ENCODE measurements at regions of chr7 and their contacts with region 1.

Region 1: DNA sequence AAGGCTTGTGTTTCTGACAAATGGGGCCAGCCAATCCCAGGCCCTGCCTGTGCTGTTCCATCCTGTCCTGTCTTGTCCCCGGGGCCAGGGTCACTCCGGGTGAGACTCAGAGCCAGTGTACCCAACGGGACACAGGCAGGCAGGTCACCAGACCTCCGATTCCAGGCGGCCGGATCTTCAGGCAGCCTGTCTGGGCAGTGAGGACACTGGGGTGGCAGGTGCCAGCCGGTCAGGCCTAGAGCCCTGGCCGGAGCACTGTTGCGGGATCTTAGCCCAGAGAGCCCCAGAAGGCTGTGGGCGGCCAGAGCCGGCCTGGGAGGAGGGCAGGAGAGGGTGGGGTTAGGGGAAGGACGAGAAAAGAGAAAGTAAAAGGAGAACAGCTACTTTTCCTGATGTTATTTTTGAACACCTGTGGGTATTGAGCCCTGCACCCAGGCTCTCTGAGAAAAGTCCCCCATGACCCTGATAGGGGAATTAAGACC is 134.3 kb upstream of the TNRC18 start:
- DNase-seq: peak; percentile 67
- ATAC-seq: peak; percentile 57
- H3K4me3 ChIP-seq: peak overlapping the region; percentile 71
- H3K27ac ChIP-seq: peak overlapping the region; percentile 98
- H3K4me1 ChIP-seq: peaks cover 39% of the 10 kb centered on the region
- H3K27me3 ChIP-seq: no peaks in the 10 kb centered on the region
- CTCF ChIP-seq: no peak
- EP300 ChIP-seq: no peak
- POLR2A ChIP-seq: peak; percentile 65
- RAD21 ChIP-seq: no peak

Region 2: GRCh38 chr7:5501465-5501864 is 56.5 kb before region 1 on chr7:
- CTCF ChIA-PET with region 1: interaction called, 3 read pairs
- POLR2A ChIA-PET with region 1: interaction called, 48 read pairs
- RAD21 ChIA-PET with region 1: interaction called, 14 read pairs
- SMC1A ChIA-PET with region 1: interaction called, 14 read pairs
- in situ Hi-C with region 1: no loop called
- intact Hi-C with region 1: no loop called
- DNase-seq: no peak
- ATAC-seq: no peak
- H3K4me3 ChIP-seq: no peak overlapping the region
- H3K27ac ChIP-seq: no peak overlapping the region
- H3K4me1 ChIP-seq: peaks cover 3% of the 10 kb centered on the region; the same call in 1 of the 2 replicates
- H3K27me3 ChIP-seq: no peaks in the 10 kb centered on the region
- CTCF ChIP-seq: no peak
- EP300 ChIP-seq: no peak
- POLR2A ChIP-seq: no peak
- RAD21 ChIP-seq: no peak

Region 3: DNA sequence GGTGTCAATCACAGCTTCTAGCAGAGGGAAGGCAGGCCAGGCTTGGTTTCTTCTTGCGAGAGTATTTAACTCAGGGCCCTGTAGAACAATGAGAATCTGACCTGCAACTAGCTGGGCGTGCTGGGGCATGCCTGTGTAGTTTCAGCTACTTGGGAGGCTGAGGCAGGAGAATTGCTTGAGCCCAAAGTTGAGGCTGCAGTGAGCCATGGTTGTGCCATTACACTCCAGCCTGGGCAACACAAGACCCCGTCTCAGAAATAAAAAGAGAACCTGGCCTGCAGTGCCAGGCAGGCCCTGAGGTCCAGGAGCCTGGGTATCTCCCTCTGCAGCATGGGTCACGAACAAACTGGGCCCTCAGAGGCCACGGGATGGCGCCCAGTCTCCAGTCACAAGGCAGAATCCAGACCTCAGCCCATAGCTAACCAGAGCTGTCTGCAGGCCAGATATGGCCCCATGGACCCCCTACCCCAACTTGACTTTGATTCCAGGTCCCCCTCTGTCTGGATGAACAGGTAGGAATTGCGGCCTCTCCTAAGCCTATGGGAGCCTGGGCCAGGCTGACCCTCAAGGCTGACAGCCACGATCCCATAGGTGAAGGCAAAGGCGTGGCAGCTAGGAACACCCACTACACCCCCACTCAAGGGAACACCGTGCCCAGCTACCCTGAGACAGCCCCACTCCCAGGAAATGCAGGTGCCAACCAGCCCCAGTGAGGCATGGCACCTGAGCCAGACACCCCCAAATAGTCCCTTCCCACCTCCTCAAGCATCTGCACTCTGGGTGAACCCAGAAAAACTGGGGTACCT is 31.7 kb before region 1 on chr7:
- CTCF ChIA-PET with region 1: interaction called, 34 read pairs
- POLR2A ChIA-PET with region 1: interaction called, 12 read pairs
- RAD21 ChIA-PET with region 1: interaction called, 28 read pairs
- SMC1A ChIA-PET with region 1: interaction called, 30 read pairs
- in situ Hi-C with region 1: no loop called
- intact Hi-C with region 1: loop called (anchors 1 kb)
- DNase-seq: no peak
- ATAC-seq: peak; percentile 4
- H3K4me3 ChIP-seq: peak overlapping the region; percentile 99; the same call in 1 of the 2 replicates
- H3K27ac ChIP-seq: peak overlapping the region; percentile 3
- H3K4me1 ChIP-seq: peaks cover 5% of the 10 kb centered on the region
- H3K27me3 ChIP-seq: no peaks in the 10 kb centered on the region
- CTCF ChIP-seq: peak in 1 of 3 experiments; percentile 31; a peak in 2 of 6 replicates
- EP300 ChIP-seq: no peak
- POLR2A ChIP-seq: no peak
- RAD21 ChIP-seq: 0 out of 2 replicates have a peak, but pooled peaks have one; percentile 1

Region 4: GRCh38 chr7:5610500-5611186 is 52.7 kb after region 1 on chr7:
- CTCF ChIA-PET with region 1: no interaction called
- POLR2A ChIA-PET with region 1: interaction called, 11 read pairs
- RAD21 ChIA-PET with region 1: no interaction called
- SMC1A ChIA-PET with region 1: interaction called, 4 read pairs
- in situ Hi-C with region 1: no loop called
- intact Hi-C with region 1: no loop called
- DNase-seq: no peak
- ATAC-seq: no peak
- H3K4me3 ChIP-seq: no peak overlapping the region
- H3K27ac ChIP-seq: no peak overlapping the region
- H3K4me1 ChIP-seq: no peaks in the 10 kb centered on the region
- H3K27me3 ChIP-seq: no peaks in the 10 kb centered on the region
- CTCF ChIP-seq: no peak
- EP300 ChIP-seq: no peak
- POLR2A ChIP-seq: no peak
- RAD21 ChIP-seq: no peak

Region 5: GRCh38 chr7:5677538-5678294 is 119.8 kb after region 1 on chr7:
- CTCF ChIA-PET with region 1: interaction called, 4 read pairs
- POLR2A ChIA-PET with region 1: interaction called, 5 read pairs
- RAD21 ChIA-PET with region 1: interaction called, 24 read pairs
- SMC1A ChIA-PET with region 1: interaction called, 20 read pairs
- in situ Hi-C with region 1: no loop called
- intact Hi-C with region 1: no loop called
- DNase-seq: no peak
- ATAC-seq: peak; percentile 81
- H3K4me3 ChIP-seq: no peak overlapping the region
- H3K27ac ChIP-seq: peak overlapping the region; percentile 10
- H3K4me1 ChIP-seq: peaks cover 50% of the 10 kb centered on the region
- H3K27me3 ChIP-seq: no peaks in the 10 kb centered on the region
- CTCF ChIP-seq: peak; percentile 68 to 74 (median 69)
- EP300 ChIP-seq: no peak
- POLR2A ChIP-seq: no peak
- RAD21 ChIP-seq: peak; percentile 77

Measured in GM12878 (cell line).